Naive thymus-derived CD4-positive, alpha-beta T cell (primary cell): ENCODE measurements at regions of chr14 and their contacts with region 1.

Region 1: GRCh38 chr14:103931422-103931821 is 3.2 kb downstream of the TDRD9 start:
- DNase-seq: no peak
- ATAC-seq: peak; percentile 71
- H3K4me3 ChIP-seq: no peak overlapping the region
- H3K4me3 Mint-ChIP-seq: no peak overlapping the region
- H3K27ac ChIP-seq: no peak overlapping the region
- H3K27ac Mint-ChIP-seq: no peak overlapping the region
- H3K4me1 ChIP-seq: no peaks in the 10 kb centered on the region
- H3K4me1 Mint-ChIP-seq: peaks cover 0 to 10% (median 0%) of the 10 kb centered on the region in 7 donors
- H3K27me3 ChIP-seq: no peaks in the 10 kb centered on the region
- H3K27me3 Mint-ChIP-seq: peaks cover 0 to 7% (median 0%) of the 10 kb centered on the region in 5 donors

Region 2: DNA sequence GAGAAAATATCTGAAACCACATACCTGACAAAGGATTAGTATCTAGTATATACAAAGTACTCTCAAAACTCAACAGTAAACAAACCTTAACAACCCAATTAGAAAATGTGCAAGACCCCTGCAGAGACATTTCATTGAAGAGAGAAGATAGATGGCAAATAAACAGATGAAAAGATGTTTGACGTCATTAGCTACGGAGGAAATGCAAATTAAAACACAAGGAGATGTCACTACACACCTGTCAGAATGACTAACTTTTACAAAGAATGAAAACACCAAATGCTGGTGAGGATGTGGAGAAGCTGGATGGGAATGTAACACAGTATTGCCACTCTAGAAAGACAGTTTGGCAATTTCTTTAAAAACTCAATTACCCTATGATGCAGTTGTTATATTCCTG is 381.6 kb after region 1 on chr14:
- CTCF ChIA-PET with region 1: no interaction called
- POLR2A ChIA-PET with region 1: interaction called, 10 read pairs
- intact Hi-C with region 1: no loop called
- DNase-seq: no peak
- ATAC-seq: no peak
- H3K4me3 ChIP-seq: no peak overlapping the region
- H3K4me3 Mint-ChIP-seq: no peak overlapping the region
- H3K27ac ChIP-seq: no peak overlapping the region
- H3K27ac Mint-ChIP-seq: peak overlapping the region in 1 of 9 donors; percentile 23
- H3K4me1 ChIP-seq: no peaks in the 10 kb centered on the region
- H3K4me1 Mint-ChIP-seq: no peaks in the 10 kb centered on the region
- H3K27me3 ChIP-seq: no peaks in the 10 kb centered on the region
- H3K27me3 Mint-ChIP-seq: no peaks in the 10 kb centered on the region

Region 3: DNA sequence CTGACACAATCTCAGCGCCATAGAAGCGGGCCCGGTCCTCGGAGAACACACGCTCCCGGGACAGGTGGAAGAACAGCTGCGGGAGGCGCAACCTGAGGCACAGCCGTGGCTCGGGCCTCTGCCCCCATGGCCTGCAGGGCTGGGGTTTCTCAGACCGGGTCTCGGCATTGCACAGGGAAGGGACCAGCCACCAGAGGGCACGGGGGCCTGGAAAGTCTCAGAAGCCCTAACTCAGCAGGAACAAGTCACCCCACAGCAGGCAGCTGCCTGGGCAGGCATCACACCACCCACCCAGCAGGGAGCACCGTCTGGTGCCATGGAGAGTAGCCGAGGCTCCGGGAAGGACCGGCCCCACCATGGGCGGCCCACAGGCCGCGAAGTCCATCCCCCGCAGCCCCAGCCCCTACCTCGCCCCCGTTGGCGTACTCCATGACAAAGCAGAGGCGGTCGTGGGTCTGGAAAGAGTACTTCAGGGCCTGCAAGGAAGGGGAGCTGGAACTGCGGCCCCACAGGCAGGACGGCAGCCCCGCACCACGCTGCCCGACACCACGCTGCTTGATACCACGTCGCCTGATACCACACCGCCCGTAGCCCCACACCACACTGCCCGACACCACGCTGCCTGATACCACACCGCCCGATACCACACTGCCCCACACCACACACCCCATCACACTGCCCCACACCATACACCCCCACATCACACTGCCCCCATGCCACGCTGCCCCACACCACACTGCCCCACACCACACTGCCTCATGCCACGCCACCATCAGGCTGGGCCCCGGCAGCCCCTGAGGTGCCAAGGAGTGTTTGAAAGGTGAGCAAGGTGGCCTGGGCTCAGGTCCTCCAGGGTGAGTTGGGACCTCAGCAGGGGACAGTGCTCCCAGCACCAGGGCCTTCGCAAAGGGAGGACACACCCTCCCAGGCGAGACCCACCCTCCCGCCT is 842.4 kb after region 1 on chr14:
- CTCF ChIA-PET with region 1: no interaction called
- POLR2A ChIA-PET with region 1: no interaction called
- intact Hi-C with region 1: no loop called
- DNase-seq: no peak
- ATAC-seq: no peak
- H3K4me3 ChIP-seq: no peak overlapping the region
- H3K4me3 Mint-ChIP-seq: no peak overlapping the region
- H3K27ac ChIP-seq: no peak overlapping the region
- H3K27ac Mint-ChIP-seq: peak overlapping the region in 2 of 9 donors; percentile 53 to 55
- H3K4me1 ChIP-seq: no peaks in the 10 kb centered on the region
- H3K4me1 Mint-ChIP-seq: peaks cover 0 to 5% (median 0%) of the 10 kb centered on the region in 7 donors
- H3K27me3 ChIP-seq: no peaks in the 10 kb centered on the region
- H3K27me3 Mint-ChIP-seq: no peaks in the 10 kb centered on the region